ENCODE measurements at regions of chr2 and their contacts with region 1.

Region 1: DNA sequence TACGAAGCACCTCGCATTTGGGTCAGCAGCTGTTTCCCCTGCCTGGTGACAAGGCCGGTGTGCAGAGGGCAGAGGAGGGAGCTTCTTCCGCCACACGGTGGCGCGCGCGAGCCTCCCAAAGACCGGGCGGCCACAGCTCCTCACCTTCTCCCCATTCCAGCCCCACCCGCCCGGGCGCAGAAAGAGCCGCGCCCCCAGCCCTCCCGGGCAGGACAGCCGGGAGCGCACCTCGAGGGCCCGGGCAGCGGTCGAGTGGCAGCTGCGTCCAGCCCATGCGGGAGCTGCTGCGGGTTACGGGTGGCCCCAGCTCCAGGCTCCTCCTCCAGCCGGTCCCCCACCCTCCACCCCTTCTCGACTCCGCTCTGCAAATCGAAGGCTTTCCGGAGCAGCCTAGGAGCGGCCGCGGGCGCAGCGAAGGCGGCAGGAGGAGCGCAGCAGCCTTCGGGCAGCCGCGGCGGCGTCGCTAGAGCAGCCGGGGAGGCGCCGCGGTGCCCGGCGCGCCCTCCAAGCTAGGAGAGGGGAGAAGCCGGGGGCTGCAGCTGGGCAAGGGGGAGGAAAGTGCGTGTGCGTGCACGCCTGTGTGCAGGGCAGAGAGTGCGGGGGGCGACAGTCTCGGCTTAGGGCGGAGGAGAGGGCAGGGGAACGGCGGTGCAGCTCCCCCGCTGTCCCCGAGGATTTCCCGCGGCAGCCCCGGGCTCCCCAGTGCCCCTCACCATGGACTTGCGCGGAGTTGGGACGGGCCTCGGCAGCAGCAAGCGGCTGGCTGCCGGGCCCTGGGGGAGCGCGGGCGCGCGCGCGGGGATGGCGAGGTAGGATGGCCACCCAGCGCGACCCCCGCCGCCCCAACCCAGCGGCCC is at the start of gene CCDC85A:
- DNase-seq: no peak
- ATAC-seq: peak; percentile 99
- H3K4me3 ChIP-seq: peak within 1 kb of the TSS; percentile 17; the same call in 1 of the 2 replicates
- H3K27ac ChIP-seq: no peak within 1 kb of the TSS
- H3K4me1 ChIP-seq: no peaks in the 10 kb centered on the region
- H3K27me3 ChIP-seq: peaks cover 6 to 7% of the 10 kb centered on the region in 2 experiments
- CTCF ChIP-seq: peak; percentile 75 to 93 (median 88)
- EP300 ChIP-seq: no peak
- POLR2A ChIP-seq: no peak
- RAD21 ChIP-seq: peak; percentile 68
- polyA plus RNA-seq, gene CCDC85A: 0.02 to 0.04 TPM

Region 2: DNA sequence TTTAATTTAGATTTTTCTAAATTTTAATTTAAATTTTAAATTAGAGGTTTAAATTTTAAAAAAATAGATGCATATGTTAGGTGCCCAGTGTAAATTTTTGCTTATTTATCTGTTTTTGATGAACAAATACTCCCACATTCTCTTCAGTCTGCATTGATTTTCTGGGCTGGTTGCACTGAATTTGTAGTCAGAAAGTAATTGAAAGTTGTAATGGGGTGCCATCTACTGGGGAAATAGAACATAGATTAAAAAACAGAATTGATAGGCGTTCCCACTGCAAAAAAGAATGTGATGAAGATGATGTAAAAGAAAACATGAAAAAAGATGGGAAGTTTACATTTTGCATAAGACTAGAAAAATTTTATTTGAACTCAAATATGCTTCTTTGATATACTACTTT is 51.7 kb before region 1 on chr2:
- CTCF ChIA-PET with region 1: no interaction called
- POLR2A ChIA-PET with region 1: no interaction called
- RAD21 ChIA-PET with region 1: no interaction called
- SMC1A ChIA-PET with region 1: no interaction called
- in situ Hi-C with region 1: no loop called
- intact Hi-C with region 1: no loop called
- DNase-seq: no peak
- ATAC-seq: peak; percentile 47; the same call in 1 of the 3 replicates
- H3K4me3 ChIP-seq: no peak overlapping the region
- H3K27ac ChIP-seq: no peak overlapping the region
- H3K4me1 ChIP-seq: no peaks in the 10 kb centered on the region
- H3K27me3 ChIP-seq: no peaks in the 10 kb centered on the region
- CTCF ChIP-seq: peak; percentile 20 to 42 (median 40); a peak in 2 of 6 replicates
- EP300 ChIP-seq: no peak
- POLR2A ChIP-seq: no peak
- RAD21 ChIP-seq: peak; percentile 64

Region 3: DNA sequence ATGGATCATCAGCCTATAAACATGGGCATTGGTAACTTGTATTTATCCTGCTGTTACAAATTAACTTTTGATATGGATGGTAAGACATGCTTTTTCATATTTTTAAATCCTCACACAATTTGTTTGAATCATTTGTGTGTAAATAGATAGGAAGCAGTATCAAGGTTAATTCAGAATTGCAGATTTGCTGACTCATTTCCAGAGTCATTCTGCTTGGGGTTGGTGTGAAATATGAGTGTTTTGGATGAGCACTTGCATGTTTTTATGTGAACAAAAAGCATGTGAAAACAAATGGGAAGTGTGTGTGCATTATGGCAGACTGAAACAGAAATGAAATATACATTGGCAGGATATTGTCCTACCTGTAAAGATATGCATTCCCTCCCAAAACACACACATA is 11.7 kb after region 1 on chr2:
- CTCF ChIA-PET with region 1: interaction called, 13 read pairs
- POLR2A ChIA-PET with region 1: no interaction called
- RAD21 ChIA-PET with region 1: interaction called, 5 read pairs
- SMC1A ChIA-PET with region 1: interaction called, 6 read pairs
- in situ Hi-C with region 1: no loop called
- intact Hi-C with region 1: no loop called
- DNase-seq: no peak
- ATAC-seq: no peak; the same call in 2 of the 3 replicates
- H3K4me3 ChIP-seq: no peak overlapping the region
- H3K27ac ChIP-seq: no peak overlapping the region
- H3K4me1 ChIP-seq: no peaks in the 10 kb centered on the region
- H3K27me3 ChIP-seq: no peaks in the 10 kb centered on the region; a peak in 2 of 4 replicates
- CTCF ChIP-seq: no peak
- EP300 ChIP-seq: no peak
- POLR2A ChIP-seq: no peak
- RAD21 ChIP-seq: no peak

Region 4: GRCh38 chr2:56522605-56523089 is 338.8 kb after region 1 on chr2:
- CTCF ChIA-PET with region 1: interaction called, 3 read pairs
- POLR2A ChIA-PET with region 1: no interaction called
- RAD21 ChIA-PET with region 1: no interaction called
- SMC1A ChIA-PET with region 1: no interaction called
- in situ Hi-C with region 1: no loop called
- intact Hi-C with region 1: loop called (anchors 5 kb)
- DNase-seq: no peak
- ATAC-seq: no peak
- H3K4me3 ChIP-seq: no peak overlapping the region
- H3K27ac ChIP-seq: no peak overlapping the region
- H3K4me1 ChIP-seq: no peaks in the 10 kb centered on the region
- H3K27me3 ChIP-seq: no peaks in the 10 kb centered on the region
- CTCF ChIP-seq: no peak
- EP300 ChIP-seq: no peak
- POLR2A ChIP-seq: no peak
- RAD21 ChIP-seq: no peak

Region 5: GRCh38 chr2:57497489-57498096 is 1313.7 kb after region 1 on chr2:
- CTCF ChIA-PET with region 1: interaction called, 8 read pairs
- POLR2A ChIA-PET with region 1: no interaction called
- RAD21 ChIA-PET with region 1: interaction called, 5 read pairs
- SMC1A ChIA-PET with region 1: no interaction called
- in situ Hi-C with region 1: loop called (anchors 10 kb)
- intact Hi-C with region 1: loop called (anchors 5 kb)
- DNase-seq: peak; percentile 4
- ATAC-seq: peak; percentile 92
- H3K4me3 ChIP-seq: no peak overlapping the region
- H3K27ac ChIP-seq: no peak overlapping the region
- H3K4me1 ChIP-seq: no peaks in the 10 kb centered on the region
- H3K27me3 ChIP-seq: no peaks in the 10 kb centered on the region
- CTCF ChIP-seq: peak; percentile 72 to 80 (median 76)
- EP300 ChIP-seq: no peak
- POLR2A ChIP-seq: no peak
- RAD21 ChIP-seq: peak; percentile 90

Region 6: DNA sequence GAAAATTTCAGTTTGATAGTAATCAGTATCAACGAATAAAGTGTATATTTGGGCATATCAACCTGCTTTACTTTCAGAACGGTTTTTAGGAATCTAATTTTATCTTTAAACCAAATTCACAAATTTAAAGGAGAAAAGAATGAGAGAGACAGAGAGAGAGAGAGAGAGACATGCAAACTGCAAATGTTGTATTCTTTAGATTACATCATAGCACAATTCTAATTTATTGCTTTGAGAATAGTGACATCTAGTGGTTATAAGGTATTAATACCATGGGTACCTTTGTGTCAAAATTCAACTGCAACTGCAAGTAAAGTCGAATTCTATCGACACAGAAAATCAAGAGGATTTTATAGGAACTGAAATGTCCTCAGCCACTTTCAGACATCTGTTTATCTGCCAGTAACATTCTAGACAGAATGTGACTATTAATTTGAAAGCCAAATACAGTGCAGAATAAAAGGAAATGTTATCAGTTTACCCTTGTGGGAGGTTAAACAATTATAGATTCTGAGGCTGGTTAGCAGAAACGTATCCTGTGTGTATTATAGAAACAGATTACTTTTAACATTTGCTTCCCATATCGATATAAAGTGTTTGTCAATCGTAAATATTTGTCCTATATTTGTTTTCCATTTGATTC is 1332.9 kb after region 1 on chr2:
- CTCF ChIA-PET with region 1: interaction called, 7 read pairs
- POLR2A ChIA-PET with region 1: no interaction called
- RAD21 ChIA-PET with region 1: interaction called, 7 read pairs
- SMC1A ChIA-PET with region 1: no interaction called
- in situ Hi-C with region 1: no loop called
- intact Hi-C with region 1: loop called (anchors 5 kb)
- DNase-seq: peak; percentile 7
- ATAC-seq: peak; percentile 90
- H3K4me3 ChIP-seq: no peak overlapping the region
- H3K27ac ChIP-seq: no peak overlapping the region
- H3K4me1 ChIP-seq: no peaks in the 10 kb centered on the region
- H3K27me3 ChIP-seq: no peaks in the 10 kb centered on the region
- CTCF ChIP-seq: peak; percentile 38 to 58 (median 38); a peak in 5 of 6 replicates
- EP300 ChIP-seq: no peak
- POLR2A ChIP-seq: no peak
- RAD21 ChIP-seq: peak; percentile 67